PC-3 (cell line): ENCODE measurements at regions of chr1 and their contacts with region 1.

Region 1: DNA sequence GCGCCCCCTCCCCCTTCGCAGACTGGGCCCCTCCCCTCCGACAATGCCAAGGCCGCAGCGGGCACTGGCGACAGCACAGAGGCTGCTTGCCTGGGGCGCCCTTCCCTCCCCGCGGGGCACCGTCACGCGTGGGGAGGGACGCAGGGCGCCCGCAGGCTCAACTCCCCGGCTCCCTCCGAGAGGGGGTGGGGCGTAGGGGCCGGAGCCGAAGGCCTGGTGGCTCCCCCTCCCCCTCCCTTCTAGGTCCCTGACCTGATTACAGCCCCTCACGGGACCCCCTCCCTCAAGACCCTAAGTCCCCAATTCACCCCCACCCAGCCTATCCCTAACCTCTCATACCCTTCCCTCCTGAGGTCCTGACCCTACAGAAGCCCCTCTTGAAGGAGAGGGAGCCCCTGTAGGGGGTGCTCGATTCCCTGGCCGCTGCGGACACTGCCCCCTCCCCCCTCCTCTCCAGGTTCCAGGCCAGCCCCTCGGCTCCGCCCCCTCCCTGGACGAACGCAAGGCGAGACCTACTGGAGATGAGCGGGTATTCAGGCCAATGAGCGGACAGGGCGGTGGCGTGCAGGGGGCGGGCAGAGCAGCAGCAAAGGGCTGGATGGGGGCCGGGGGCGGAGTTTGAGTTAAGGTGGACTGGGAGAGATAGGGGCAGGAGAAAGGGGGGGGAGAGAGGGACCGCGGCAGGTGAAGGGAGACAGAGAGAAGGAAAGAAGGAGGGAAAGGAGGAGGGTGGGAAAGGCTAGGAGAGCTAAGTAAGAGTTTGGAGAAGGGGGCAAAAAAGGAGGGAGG is 733 bp upstream of the ZBTB7B start:
- DNase-seq: peak; percentile 99
- ATAC-seq: peak; percentile 54
- H3K4me3 ChIP-seq: peak overlapping the region; percentile 83
- H3K27ac ChIP-seq: peak overlapping the region; percentile 77
- H3K4me1 ChIP-seq: peaks cover 49% of the 10 kb centered on the region
- H3K27me3 ChIP-seq: no peaks in the 10 kb centered on the region
- CTCF ChIP-seq: peak; percentile 81

Region 2: GRCh38 chr1:154819628-154820590 is 182.0 kb before region 1 on chr1:
- CTCF ChIA-PET with region 1: no interaction called
- POLR2A ChIA-PET with region 1: no interaction called
- intact Hi-C with region 1: no loop called
- DNase-seq: peak; percentile 48
- ATAC-seq: peak; percentile 70
- H3K4me3 ChIP-seq: no peak overlapping the region
- H3K27ac ChIP-seq: no peak overlapping the region
- H3K4me1 ChIP-seq: no peaks in the 10 kb centered on the region
- H3K27me3 ChIP-seq: peaks cover 37% of the 10 kb centered on the region
- CTCF ChIP-seq: peak; percentile 66

Region 3: DNA sequence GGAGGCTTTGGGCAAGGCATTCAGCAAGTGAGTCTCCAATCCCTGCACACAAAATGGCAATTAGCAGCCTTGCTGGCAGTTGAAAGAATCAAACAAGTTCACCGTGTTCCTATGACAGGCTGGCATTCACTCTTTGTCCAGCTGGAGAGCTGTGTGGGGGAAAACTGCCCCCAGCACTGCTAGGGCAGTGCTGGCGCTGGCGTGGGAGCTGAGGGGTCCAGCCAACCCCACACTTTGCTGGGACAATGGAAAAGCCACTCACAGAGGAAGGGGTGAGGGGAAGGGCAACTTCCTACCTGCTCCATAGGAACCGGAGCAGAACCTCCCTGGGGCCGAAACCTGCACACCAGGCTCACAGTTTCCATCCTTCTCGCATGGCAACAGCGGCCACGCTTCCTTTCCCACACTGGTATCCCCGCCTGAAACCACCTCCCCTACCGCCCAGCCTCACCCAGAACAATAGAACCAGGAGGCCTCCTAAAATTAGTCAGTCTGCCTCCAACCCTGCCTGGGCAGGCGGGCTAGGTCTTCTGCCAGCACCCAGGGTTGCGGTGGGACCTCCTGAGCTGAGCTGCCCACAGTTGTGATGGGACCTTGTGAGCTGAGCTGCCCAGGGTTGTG is 105.0 kb before region 1 on chr1:
- CTCF ChIA-PET with region 1: no interaction called
- POLR2A ChIA-PET with region 1: no interaction called
- intact Hi-C with region 1: no loop called
- DNase-seq: no peak
- ATAC-seq: no peak
- H3K4me3 ChIP-seq: no peak overlapping the region
- H3K27ac ChIP-seq: no peak overlapping the region
- H3K4me1 ChIP-seq: no peaks in the 10 kb centered on the region
- H3K27me3 ChIP-seq: peaks cover 5% of the 10 kb centered on the region; the same call in 1 of the 2 replicates
- CTCF ChIP-seq: no peak

Region 4: DNA sequence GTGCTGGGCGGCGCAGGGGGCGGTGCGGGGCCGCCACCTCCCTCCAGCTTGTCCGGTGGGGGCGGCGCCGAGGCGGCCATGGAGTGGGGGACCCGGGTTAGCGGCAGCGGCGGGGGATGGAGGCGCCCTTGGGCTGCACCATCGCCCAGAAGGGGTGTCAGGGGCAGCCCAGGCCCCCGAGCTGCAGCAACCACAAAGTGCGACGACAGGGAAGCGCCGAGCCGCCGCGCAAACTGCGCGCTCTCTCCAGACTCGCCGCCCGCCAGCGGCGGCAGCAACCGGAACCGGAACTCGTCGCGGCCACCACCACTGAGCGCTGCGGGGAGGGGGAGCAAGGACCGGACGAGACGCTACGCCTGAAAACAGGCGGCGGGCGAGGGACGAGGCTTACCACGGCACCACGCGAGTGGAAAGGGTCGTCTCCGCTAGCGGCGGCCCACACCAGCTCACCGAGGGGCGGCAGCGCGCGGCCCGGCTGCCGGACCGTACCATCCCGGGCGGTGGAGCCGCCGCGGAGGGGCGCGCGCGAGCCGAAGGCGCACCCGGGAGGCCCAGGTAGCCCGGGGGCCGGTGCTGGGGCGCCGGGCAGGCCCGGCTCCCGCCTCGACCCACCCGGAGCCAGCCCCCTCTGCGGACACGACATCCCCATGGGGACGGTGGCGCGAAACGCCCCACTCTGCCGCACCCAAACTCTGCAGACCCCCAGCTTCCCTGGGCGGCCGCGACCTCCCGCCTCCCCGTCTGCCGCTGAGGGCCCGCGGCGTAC is 40.2 kb before region 1 on chr1 and contains the start of gene PYGO2:
- CTCF ChIA-PET with region 1: interaction called, 8 read pairs
- POLR2A ChIA-PET with region 1: no interaction called
- intact Hi-C with region 1: loop called (anchors 2 kb)
- DNase-seq: peak; percentile 80
- ATAC-seq: peak; percentile 82
- H3K4me3 ChIP-seq: peak within 1 kb of the TSS; percentile 71
- H3K27ac ChIP-seq: peak within 1 kb of the TSS; percentile 83
- H3K4me1 ChIP-seq: peaks cover 19% of the 10 kb centered on the region
- H3K27me3 ChIP-seq: no peaks in the 10 kb centered on the region
- CTCF ChIP-seq: peak; percentile 78
- total RNA-seq, gene PYGO2: 41.7 and 43.3 TPM in 2 replicates

Region 5: GRCh38 chr1:154982897-154983648 is 18.8 kb before region 1 on chr1 and contains the start of gene FLAD1:
- CTCF ChIA-PET with region 1: interaction called, 4 read pairs
- POLR2A ChIA-PET with region 1: no interaction called
- intact Hi-C with region 1: loop called (anchors 1 kb)
- DNase-seq: peak; percentile 100
- ATAC-seq: peak; percentile 100
- H3K4me3 ChIP-seq: peak within 1 kb of the TSS; percentile 86
- H3K27ac ChIP-seq: peak within 1 kb of the TSS; percentile 50
- H3K4me1 ChIP-seq: peaks cover 7% of the 10 kb centered on the region
- H3K27me3 ChIP-seq: no peaks in the 10 kb centered on the region
- CTCF ChIP-seq: no peak
- total RNA-seq, gene FLAD1: 58.5 and 84.0 TPM in 2 replicates

Region 6: DNA sequence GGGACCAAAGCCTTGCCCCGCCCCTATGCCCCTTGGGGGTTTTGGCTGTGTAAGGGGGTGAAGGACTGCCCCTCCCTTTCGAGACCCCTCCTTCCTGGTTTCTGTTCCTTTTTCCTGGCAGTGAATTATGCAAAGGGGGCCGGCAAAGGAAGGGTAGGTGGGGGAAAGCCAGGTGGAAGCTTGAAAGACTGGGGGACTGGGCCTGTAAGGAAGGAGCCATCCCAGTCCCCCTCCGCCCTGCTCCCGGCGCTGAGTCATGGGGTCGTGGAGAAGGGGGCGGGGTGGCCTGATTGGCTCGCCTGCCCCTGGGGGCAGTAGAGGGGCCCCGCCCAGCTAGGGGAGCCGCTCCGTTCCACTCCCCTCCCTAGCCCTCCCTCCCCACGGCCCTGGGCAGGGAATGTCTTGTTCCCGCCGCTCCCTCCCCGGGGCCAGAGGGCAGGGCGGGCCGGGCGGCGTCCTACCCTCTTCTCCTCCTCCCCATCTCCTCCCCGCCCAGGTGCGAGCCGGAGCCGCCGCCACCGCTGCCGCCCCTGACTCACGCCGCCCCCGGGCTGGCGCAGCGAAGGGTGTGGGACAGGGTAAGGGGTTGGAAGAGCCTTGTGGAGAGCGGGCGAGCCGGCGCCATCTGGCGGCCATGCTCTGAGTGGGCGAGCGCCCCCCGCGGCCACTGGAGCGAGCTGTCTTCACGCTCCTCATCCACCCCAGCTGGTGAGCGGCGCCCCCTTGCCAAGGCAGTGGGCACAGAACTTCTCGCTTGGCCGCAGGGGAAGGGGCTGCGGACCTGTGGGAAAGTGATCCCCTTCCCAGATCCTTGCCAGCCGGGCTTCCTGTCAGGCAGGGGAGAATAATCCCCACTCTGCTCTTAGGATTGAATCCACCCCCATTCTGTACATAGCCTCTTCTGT is 15.4 kb after region 1 on chr1:
- CTCF ChIA-PET with region 1: interaction called, 16 read pairs
- POLR2A ChIA-PET with region 1: interaction called, 8 read pairs
- intact Hi-C with region 1: loop called (anchors 1 kb)
- DNase-seq: peak; percentile 99
- ATAC-seq: peak; percentile 89
- H3K4me3 ChIP-seq: peak overlapping the region; percentile 42
- H3K27ac ChIP-seq: peak overlapping the region; percentile 87
- H3K4me1 ChIP-seq: peaks cover 21% of the 10 kb centered on the region
- H3K27me3 ChIP-seq: no peaks in the 10 kb centered on the region
- CTCF ChIP-seq: peak; percentile 100

Region 7: DNA sequence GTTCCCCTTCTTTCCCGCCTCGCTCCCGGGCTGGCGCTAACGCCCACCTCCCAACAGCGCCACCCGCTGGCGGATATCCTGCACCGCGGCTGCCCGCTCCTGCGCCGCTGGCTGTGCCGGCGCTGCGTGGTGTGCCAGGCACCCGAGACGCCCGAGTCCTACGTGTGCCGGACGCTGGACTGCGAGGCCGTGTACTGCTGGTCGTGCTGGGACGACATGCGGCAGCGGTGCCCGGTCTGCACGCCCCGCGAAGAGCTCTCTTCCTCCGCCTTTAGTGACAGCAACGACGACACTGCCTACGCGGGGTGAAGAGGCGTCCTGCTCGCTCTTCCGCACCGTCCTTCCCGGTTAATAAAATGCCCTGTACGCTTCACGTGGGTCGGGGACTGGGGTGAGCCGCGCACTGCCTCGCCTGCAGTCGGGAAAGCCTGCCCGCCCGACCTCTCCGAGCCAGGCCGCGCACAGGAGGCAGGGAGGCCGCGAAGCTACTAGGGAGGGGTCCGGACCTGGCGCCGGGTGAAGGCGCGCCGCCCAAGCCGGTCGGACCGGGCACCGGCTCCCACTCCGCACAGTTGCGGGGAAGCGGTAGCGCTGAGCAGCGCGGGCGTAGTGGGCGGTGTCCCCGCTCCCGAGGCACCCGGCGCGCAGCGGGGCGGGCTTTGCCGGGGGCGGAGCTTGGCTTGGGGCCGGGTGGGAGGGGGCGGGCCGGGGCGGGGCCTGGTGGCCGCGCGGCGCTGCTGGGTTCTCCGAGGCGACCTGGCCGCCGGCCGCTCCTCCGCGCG is 48.9 kb after region 1 on chr1 and contains the start of gene ADAM15:
- CTCF ChIA-PET with region 1: no interaction called
- POLR2A ChIA-PET with region 1: no interaction called
- intact Hi-C with region 1: loop called (anchors 2 kb)
- DNase-seq: peak; percentile 93
- ATAC-seq: peak; percentile 56
- H3K4me3 ChIP-seq: peak within 1 kb of the TSS; percentile 95
- H3K27ac ChIP-seq: peak within 1 kb of the TSS; percentile 67
- H3K4me1 ChIP-seq: peaks cover 36% of the 10 kb centered on the region
- H3K27me3 ChIP-seq: no peaks in the 10 kb centered on the region
- CTCF ChIP-seq: peak; percentile 97
- total RNA-seq, gene ADAM15: 334 and 384 TPM in 2 replicates

Region 8: GRCh38 chr1:155070721-155071569 is 69.1 kb after region 1 on chr1:
- CTCF ChIA-PET with region 1: interaction called, 12 read pairs
- POLR2A ChIA-PET with region 1: no interaction called
- intact Hi-C with region 1: no loop called
- DNase-seq: peak; percentile 93
- ATAC-seq: peak; percentile 94
- H3K4me3 ChIP-seq: peak overlapping the region; percentile 56
- H3K27ac ChIP-seq: no peak overlapping the region
- H3K4me1 ChIP-seq: peaks cover 11% of the 10 kb centered on the region; the same call in 1 of the 2 replicates
- H3K27me3 ChIP-seq: no peaks in the 10 kb centered on the region
- CTCF ChIP-seq: peak; percentile 55

Region 9: DNA sequence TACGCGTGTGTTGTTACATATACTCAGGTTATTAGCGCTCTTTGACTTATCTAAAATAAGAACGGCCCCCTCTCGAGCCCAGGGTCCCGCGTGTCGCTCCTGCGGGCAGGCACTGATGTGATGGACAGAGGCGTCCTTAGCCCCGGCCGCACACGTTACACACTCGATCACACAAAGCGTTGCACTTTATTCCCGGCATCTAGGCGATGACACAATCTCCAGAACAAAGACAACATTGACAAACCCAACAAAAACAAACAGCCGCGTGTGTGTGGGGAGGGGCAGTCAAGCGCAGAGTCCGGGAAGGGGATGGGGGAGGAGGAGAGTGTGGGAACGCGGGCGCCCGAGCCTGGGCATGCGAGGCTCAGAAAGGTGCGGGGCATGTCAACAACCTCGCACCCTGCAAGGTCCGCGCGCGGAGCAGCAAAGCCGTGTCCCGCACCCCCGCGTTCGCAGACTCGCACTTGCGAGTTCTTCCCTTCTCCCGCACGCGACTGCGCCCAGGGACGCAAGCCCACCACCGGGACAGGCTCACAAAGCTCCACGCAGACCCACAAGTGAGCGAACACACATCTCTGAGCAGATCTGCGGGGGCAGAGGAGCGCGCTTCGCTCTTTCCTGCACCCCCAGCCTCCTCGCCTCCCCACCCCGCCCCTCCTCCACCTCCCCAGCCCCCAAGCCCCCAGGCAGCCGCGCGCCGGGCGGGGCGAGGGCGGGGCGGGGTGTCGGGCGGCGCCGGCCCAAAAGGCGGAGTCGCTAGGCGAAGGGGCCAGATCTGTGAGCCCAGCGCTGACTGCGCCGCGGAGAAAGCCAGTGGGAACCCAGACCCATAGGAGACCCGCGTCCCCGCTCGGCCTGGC is 125.5 kb after region 1 on chr1 and contains the start of gene EFNA1:
- CTCF ChIA-PET with region 1: interaction called, 10 read pairs
- POLR2A ChIA-PET with region 1: no interaction called
- intact Hi-C with region 1: no loop called
- DNase-seq: peak; percentile 86
- ATAC-seq: peak; percentile 45
- H3K4me3 ChIP-seq: peak within 1 kb of the TSS; percentile 85
- H3K27ac ChIP-seq: peak within 1 kb of the TSS; percentile 99
- H3K4me1 ChIP-seq: peaks cover 68% of the 10 kb centered on the region
- H3K27me3 ChIP-seq: no peaks in the 10 kb centered on the region
- CTCF ChIP-seq: no peak
- total RNA-seq, gene EFNA1: 29.4 and 49.9 TPM in 2 replicates